ENCODE measurements at regions of chr6 and their contacts with region 1.

Region 1: DNA sequence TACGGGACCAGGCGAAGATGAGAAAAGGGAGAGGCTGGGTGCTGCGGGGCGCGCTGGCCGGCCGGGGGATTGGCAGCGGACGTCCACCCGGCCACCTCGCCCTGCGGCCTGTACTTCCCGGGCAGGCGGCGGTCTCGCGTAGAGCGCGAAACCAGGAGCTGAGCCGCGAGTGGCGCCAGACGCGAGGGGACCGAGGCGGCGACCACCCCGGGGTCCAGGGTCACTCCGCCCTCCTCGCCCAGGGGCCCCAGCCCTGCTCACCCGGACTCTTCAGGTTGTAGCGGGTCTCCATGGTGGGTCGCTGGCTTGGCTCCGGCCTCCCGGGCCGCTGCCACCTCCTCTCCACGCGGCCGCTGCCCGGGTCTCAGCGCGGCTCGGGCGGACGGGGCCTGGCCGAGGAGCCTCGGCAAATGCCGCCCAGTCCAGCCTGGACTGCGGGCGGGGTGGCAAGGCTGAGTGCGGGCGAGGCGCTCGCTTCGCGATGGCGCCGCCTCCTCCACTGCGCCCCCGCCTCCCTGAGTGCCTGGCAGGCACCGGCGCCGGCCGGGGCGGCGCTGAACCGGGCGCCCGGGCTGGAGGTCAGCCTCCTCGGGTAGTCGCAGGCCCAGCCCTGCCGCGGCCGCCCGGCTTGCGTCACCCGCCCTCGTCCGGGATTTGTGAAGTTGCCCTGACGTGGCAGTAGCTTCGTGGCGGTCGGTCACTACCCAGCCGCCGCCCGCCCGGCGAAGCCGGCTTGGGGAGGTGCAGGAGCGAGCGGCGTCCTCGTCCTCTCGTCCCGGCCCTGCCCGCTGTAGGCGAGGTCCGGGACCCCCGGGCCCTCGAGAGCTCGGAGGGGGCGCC is at the start of gene UBE2J1:
- DNase-seq: peak; percentile 86
- H3K4me3 ChIP-seq: peak within 1 kb of the TSS; percentile 78
- H3K27ac ChIP-seq: peak within 1 kb of the TSS; percentile 99
- H3K4me1 ChIP-seq: peaks cover 69% of the 10 kb centered on the region
- CTCF ChIP-seq: no peak
- total RNA-seq, gene UBE2J1: 117 and 123 TPM in 2 replicates

Region 2: DNA sequence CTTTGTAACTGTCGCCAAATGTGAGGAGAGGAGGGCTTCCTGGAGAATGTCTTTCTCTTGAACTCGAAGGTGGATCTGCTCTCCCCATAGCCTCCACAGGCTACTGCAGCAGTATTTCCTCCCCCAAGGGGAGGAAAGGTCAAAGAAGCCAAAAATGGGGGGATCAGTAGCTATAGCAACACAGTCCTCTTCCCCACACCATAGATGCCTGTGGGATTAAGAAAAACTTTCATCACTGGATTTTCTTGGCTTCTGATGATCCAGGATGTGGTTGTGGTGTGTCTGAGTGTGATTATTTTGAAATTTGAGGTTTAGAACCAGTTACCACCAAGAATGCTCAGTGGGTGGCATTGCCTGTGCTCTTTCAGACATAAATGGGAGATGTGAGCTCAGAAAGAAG is 1445.0 kb before region 1 on chr6:
- CTCF ChIA-PET with region 1: no interaction called
- POLR2A ChIA-PET with region 1: interaction called, 13 read pairs
- intact Hi-C with region 1: loop called (anchors 5 kb)
- DNase-seq: peak; percentile 72
- H3K4me3 ChIP-seq: no peak overlapping the region
- H3K27ac ChIP-seq: peak overlapping the region; percentile 99
- H3K4me1 ChIP-seq: peaks cover 98% of the 10 kb centered on the region
- CTCF ChIP-seq: no peak

Region 3: DNA sequence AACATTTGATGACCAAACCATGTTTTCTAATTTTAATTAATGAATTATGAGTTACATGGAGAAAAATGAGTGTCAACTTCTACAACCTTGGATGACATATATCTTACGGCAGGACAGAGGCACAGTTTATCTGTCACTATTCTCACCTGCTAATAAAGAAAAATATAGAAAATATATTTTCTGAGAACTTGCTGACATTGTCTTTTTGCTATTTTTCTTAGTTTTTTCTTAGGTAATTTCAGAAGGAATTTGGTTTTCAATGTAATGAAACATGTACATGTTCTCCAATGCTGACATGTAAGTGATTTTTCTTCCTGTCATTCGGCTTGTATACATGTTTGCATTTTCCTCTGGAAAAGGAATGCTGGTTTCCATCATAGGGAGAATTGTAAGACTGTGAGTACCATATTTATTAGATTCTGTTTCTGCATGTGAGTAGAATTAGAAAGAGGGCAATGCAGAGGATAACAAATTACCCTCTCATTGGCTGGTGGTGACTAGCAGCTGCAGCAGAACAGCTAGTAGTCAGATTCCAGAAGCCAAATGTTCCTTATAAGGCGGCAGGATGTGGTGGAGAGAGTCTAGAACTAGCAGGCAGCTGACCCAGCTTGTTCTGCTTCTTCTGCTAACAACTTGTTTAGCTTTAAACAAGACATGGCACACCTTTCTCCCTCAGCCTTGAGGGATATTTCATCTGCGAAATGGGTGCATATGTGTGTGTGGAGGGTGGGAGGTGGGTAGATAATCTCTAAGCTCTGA is 1437.7 kb before region 1 on chr6:
- CTCF ChIA-PET with region 1: no interaction called
- POLR2A ChIA-PET with region 1: interaction called, 9 read pairs
- intact Hi-C with region 1: loop called (anchors 2 kb)
- DNase-seq: peak; percentile 58
- H3K4me3 ChIP-seq: no peak overlapping the region
- H3K27ac ChIP-seq: peak overlapping the region; percentile 99
- H3K4me1 ChIP-seq: peaks cover 95% of the 10 kb centered on the region
- CTCF ChIP-seq: no peak

Region 4: GRCh38 chr6:88992741-88993552 is 359.6 kb before region 1 on chr6:
- CTCF ChIA-PET with region 1: no interaction called
- POLR2A ChIA-PET with region 1: no interaction called
- intact Hi-C with region 1: no loop called
- DNase-seq: no peak
- H3K4me3 ChIP-seq: no peak overlapping the region
- H3K27ac ChIP-seq: no peak overlapping the region
- H3K4me1 ChIP-seq: no peaks in the 10 kb centered on the region
- CTCF ChIP-seq: no peak

Region 5: GRCh38 chr6:89145787-89146646 is 206.5 kb before region 1 on chr6 and contains the start of gene PM20D2:
- CTCF ChIA-PET with region 1: interaction called, 3 read pairs
- POLR2A ChIA-PET with region 1: interaction called, 8 read pairs
- intact Hi-C with region 1: loop called (anchors 5 kb)
- DNase-seq: peak; percentile 86
- H3K4me3 ChIP-seq: peak within 1 kb of the TSS; percentile 76
- H3K27ac ChIP-seq: peak within 1 kb of the TSS; percentile 76
- H3K4me1 ChIP-seq: peaks cover 41% of the 10 kb centered on the region
- CTCF ChIP-seq: no peak
- total RNA-seq, gene PM20D2: 33.1 and 35.1 TPM in 2 replicates

Region 6: GRCh38 chr6:89339565-89339964 is 12.9 kb before region 1 on chr6:
- CTCF ChIA-PET with region 1: interaction called, 5 read pairs
- POLR2A ChIA-PET with region 1: interaction called, 18 read pairs
- intact Hi-C with region 1: no loop called
- DNase-seq: no peak
- H3K4me3 ChIP-seq: no peak overlapping the region
- H3K27ac ChIP-seq: no peak overlapping the region
- H3K4me1 ChIP-seq: peaks cover 15% of the 10 kb centered on the region
- CTCF ChIP-seq: no peak

Region 7: DNA sequence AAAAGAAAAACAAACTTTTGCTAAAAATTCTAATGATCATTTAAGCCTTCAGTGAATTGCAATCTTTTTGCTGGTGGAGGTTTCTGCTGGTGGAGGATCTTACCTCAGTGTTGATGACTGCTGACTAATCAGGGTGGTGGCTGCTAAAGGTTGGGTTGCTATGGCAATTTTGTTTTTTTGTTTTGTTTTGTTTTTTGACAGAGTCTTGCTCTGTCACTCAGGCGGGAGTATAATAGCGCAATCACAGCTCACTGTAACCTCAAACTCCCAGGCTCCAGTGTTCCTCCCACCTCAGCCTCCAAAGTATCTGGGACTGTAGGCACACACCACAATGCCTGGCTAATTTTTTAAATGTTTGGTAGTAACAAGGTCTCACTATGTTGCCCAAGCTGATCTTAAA is 175.1 kb after region 1 on chr6:
- CTCF ChIA-PET with region 1: no interaction called
- POLR2A ChIA-PET with region 1: no interaction called
- intact Hi-C with region 1: no loop called
- DNase-seq: no peak
- H3K4me3 ChIP-seq: no peak overlapping the region
- H3K27ac ChIP-seq: no peak overlapping the region
- H3K4me1 ChIP-seq: peaks cover 14% of the 10 kb centered on the region
- CTCF ChIP-seq: no peak

Region 8: GRCh38 chr6:90383196-90383822 is 1030.8 kb after region 1 on chr6:
- CTCF ChIA-PET with region 1: no interaction called
- POLR2A ChIA-PET with region 1: interaction called, 5 read pairs
- intact Hi-C with region 1: loop called (anchors 5 kb)
- DNase-seq: peak; percentile 89
- H3K4me3 ChIP-seq: peak overlapping the region; percentile 59
- H3K27ac ChIP-seq: peak overlapping the region; percentile 97
- H3K4me1 ChIP-seq: peaks cover 97% of the 10 kb centered on the region
- CTCF ChIP-seq: no peak